Activated CD4-positive, alpha-beta T cell treated with anti-CD3 and anti-CD28 coated beads for 36 hours (primary cell): ENCODE measurements at regions of chr9 and their contacts with region 1.

Region 1: GRCh38 chr9:110256380-110257096 is at the start of gene TXN:
- DNase-seq: peak; percentile 94
- ATAC-seq: peak; percentile 77
- H3K4me3 Mint-ChIP-seq: peak within 1 kb of the TSS; percentile 95
- H3K27ac Mint-ChIP-seq: peak within 1 kb of the TSS; percentile 99
- H3K4me1 Mint-ChIP-seq: peaks cover 60% of the 10 kb centered on the region
- H3K27me3 Mint-ChIP-seq: no peaks in the 10 kb centered on the region
- total RNA-seq, gene TXN: 449 to 553 TPM

Region 2: GRCh38 chr9:109880277-109881169 is 376.0 kb before region 1 on chr9:
- CTCF ChIA-PET with region 1: no interaction called
- POLR2A ChIA-PET with region 1: interaction called, 3 read pairs
- intact Hi-C with region 1: loop called in 1 of 2 experiments (anchors 10 kb)
- DNase-seq: peak; percentile 50
- ATAC-seq: peak; percentile 90
- H3K4me3 Mint-ChIP-seq: no peak overlapping the region
- H3K27ac Mint-ChIP-seq: peak overlapping the region; percentile 51
- H3K4me1 Mint-ChIP-seq: peaks cover 8% of the 10 kb centered on the region
- H3K27me3 Mint-ChIP-seq: peaks cover 6% of the 10 kb centered on the region

Region 3: GRCh38 chr9:109894921-109895758 is 361.4 kb before region 1 on chr9:
- CTCF ChIA-PET with region 1: no interaction called
- POLR2A ChIA-PET with region 1: no interaction called
- intact Hi-C with region 1: loop called in 1 of 2 experiments (anchors 2 kb)
- DNase-seq: peak; percentile 80
- ATAC-seq: peak; percentile 75
- H3K4me3 Mint-ChIP-seq: peak overlapping the region; percentile 36
- H3K27ac Mint-ChIP-seq: peak overlapping the region; percentile 87
- H3K4me1 Mint-ChIP-seq: peaks cover 30% of the 10 kb centered on the region
- H3K27me3 Mint-ChIP-seq: peaks cover 6% of the 10 kb centered on the region

Region 4: GRCh38 chr9:109986521-109986991 is 270.0 kb before region 1 on chr9:
- CTCF ChIA-PET with region 1: no interaction called
- POLR2A ChIA-PET with region 1: no interaction called
- intact Hi-C with region 1: no loop called
- DNase-seq: no peak
- ATAC-seq: no peak
- H3K4me3 Mint-ChIP-seq: no peak overlapping the region
- H3K27ac Mint-ChIP-seq: no peak overlapping the region
- H3K4me1 Mint-ChIP-seq: no peaks in the 10 kb centered on the region
- H3K27me3 Mint-ChIP-seq: no peaks in the 10 kb centered on the region

Region 5: DNA sequence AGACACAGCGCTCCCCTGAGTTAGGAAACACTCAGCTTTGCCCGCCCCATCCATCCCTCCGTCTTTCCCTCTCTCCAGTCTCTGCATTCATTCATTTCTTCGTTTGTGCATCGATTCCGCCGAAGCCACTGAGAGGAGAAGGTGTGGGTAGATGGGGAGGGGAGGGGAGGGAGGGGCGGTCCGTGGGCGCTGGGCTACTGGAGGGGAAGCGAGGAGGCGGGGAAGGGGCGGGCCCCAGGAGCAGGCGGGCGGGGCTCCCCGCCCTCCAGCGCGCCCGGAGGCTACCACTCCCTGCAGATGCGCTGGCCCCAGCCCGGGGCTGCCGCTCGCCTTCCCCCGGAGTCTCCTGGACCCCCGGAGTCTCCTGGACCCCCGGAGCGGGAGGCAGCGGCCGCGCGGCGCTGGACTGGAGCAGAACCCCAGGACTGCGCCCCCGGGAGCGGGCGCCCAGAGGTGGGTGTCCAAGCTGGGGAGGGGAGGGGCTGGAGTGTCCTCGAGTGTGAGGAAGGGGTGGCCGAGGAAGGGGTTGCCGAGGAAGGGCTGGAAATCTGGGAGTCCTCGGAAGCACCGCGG is 208.0 kb before region 1 on chr9:
- CTCF ChIA-PET with region 1: no interaction called
- POLR2A ChIA-PET with region 1: no interaction called
- intact Hi-C with region 1: loop called in 1 of 2 experiments (anchors 1 kb)
- DNase-seq: peak; percentile 93
- ATAC-seq: peak; percentile 89
- H3K4me3 Mint-ChIP-seq: peak overlapping the region; percentile 87
- H3K27ac Mint-ChIP-seq: peak overlapping the region; percentile 75
- H3K4me1 Mint-ChIP-seq: peaks cover 36% of the 10 kb centered on the region
- H3K27me3 Mint-ChIP-seq: peaks cover 10% of the 10 kb centered on the region

Region 6: GRCh38 chr9:110183208-110184145 is 73.1 kb before region 1 on chr9:
- CTCF ChIA-PET with region 1: no interaction called
- POLR2A ChIA-PET with region 1: no interaction called
- intact Hi-C with region 1: no loop called
- DNase-seq: peak; percentile 77
- ATAC-seq: peak; percentile 90
- H3K4me3 Mint-ChIP-seq: no peak overlapping the region
- H3K27ac Mint-ChIP-seq: no peak overlapping the region
- H3K4me1 Mint-ChIP-seq: peaks cover 2% of the 10 kb centered on the region
- H3K27me3 Mint-ChIP-seq: no peaks in the 10 kb centered on the region

Region 7: GRCh38 chr9:111483862-111484571 is 1227.5 kb after region 1 on chr9 and contains the start of gene ECPAS:
- CTCF ChIA-PET with region 1: no interaction called
- POLR2A ChIA-PET with region 1: no interaction called
- intact Hi-C with region 1: loop called in 1 of 2 experiments (anchors 1 kb)
- DNase-seq: peak; percentile 83
- ATAC-seq: peak; percentile 79
- H3K4me3 Mint-ChIP-seq: peak within 1 kb of the TSS; percentile 81
- H3K27ac Mint-ChIP-seq: peak within 1 kb of the TSS; percentile 89
- H3K4me1 Mint-ChIP-seq: peaks cover 28% of the 10 kb centered on the region
- H3K27me3 Mint-ChIP-seq: no peaks in the 10 kb centered on the region
- total RNA-seq, gene ECPAS: 78.4 to 127 TPM

Region 8: GRCh38 chr9:111926421-111926875 is 1669.9 kb after region 1 on chr9:
- CTCF ChIA-PET with region 1: no interaction called
- POLR2A ChIA-PET with region 1: no interaction called
- intact Hi-C with region 1: loop called in 1 of 2 experiments (anchors 10 kb)
- DNase-seq: peak; percentile 68
- ATAC-seq: peak; percentile 96
- H3K4me3 Mint-ChIP-seq: no peak overlapping the region
- H3K27ac Mint-ChIP-seq: no peak overlapping the region
- H3K4me1 Mint-ChIP-seq: peaks cover 25% of the 10 kb centered on the region
- H3K27me3 Mint-ChIP-seq: no peaks in the 10 kb centered on the region